IMR-90 (cell line): ENCODE measurements at regions of chr20 and their contacts with region 1.

Region 1: GRCh38 chr20:47379433-47380150 is 23.1 kb upstream of the ZMYND8 start:
- DNase-seq: peak; percentile 97
- ATAC-seq: peak; percentile 69
- H3K4me3 ChIP-seq: no peak overlapping the region
- H3K27ac ChIP-seq: no peak overlapping the region; the same call in 1 of the 2 replicates
- H3K4me1 ChIP-seq: peaks cover 9% of the 10 kb centered on the region
- H3K27me3 ChIP-seq: no peaks in the 10 kb centered on the region
- CTCF ChIP-seq: no peak
- POLR2A ChIP-seq: no peak; the same call in 1 of the 2 replicates
- RAD21 ChIP-seq: no peak; the same call in none of the 2 replicates

Region 2: GRCh38 chr20:46914789-46915379 is 464.7 kb before region 1 on chr20:
- CTCF ChIA-PET with region 1: no interaction called
- POLR2A ChIA-PET with region 1: no interaction called
- dilution Hi-C with region 1: no loop called
- in situ Hi-C with region 1: no loop called
- intact Hi-C with region 1: no loop called
- DNase-seq: peak; percentile 35
- ATAC-seq: no peak
- H3K4me3 ChIP-seq: no peak overlapping the region
- H3K27ac ChIP-seq: no peak overlapping the region
- H3K4me1 ChIP-seq: peaks cover 11% of the 10 kb centered on the region
- H3K27me3 ChIP-seq: no peaks in the 10 kb centered on the region
- CTCF ChIP-seq: no peak
- POLR2A ChIP-seq: no peak
- RAD21 ChIP-seq: no peak

Region 3: GRCh38 chr20:47146703-47147102 is 232.9 kb before region 1 on chr20:
- CTCF ChIA-PET with region 1: no interaction called
- POLR2A ChIA-PET with region 1: no interaction called
- dilution Hi-C with region 1: no loop called
- in situ Hi-C with region 1: no loop called
- intact Hi-C with region 1: no loop called
- DNase-seq: peak; percentile 73
- ATAC-seq: peak; percentile 84
- H3K4me3 ChIP-seq: no peak overlapping the region
- H3K27ac ChIP-seq: no peak overlapping the region
- H3K4me1 ChIP-seq: peaks cover 8% of the 10 kb centered on the region; the same call in 1 of the 2 replicates
- H3K27me3 ChIP-seq: no peaks in the 10 kb centered on the region
- CTCF ChIP-seq: no peak
- POLR2A ChIP-seq: no peak
- RAD21 ChIP-seq: 0 out of 2 replicates have a peak, but pooled peaks have one; percentile 13

Region 4: DNA sequence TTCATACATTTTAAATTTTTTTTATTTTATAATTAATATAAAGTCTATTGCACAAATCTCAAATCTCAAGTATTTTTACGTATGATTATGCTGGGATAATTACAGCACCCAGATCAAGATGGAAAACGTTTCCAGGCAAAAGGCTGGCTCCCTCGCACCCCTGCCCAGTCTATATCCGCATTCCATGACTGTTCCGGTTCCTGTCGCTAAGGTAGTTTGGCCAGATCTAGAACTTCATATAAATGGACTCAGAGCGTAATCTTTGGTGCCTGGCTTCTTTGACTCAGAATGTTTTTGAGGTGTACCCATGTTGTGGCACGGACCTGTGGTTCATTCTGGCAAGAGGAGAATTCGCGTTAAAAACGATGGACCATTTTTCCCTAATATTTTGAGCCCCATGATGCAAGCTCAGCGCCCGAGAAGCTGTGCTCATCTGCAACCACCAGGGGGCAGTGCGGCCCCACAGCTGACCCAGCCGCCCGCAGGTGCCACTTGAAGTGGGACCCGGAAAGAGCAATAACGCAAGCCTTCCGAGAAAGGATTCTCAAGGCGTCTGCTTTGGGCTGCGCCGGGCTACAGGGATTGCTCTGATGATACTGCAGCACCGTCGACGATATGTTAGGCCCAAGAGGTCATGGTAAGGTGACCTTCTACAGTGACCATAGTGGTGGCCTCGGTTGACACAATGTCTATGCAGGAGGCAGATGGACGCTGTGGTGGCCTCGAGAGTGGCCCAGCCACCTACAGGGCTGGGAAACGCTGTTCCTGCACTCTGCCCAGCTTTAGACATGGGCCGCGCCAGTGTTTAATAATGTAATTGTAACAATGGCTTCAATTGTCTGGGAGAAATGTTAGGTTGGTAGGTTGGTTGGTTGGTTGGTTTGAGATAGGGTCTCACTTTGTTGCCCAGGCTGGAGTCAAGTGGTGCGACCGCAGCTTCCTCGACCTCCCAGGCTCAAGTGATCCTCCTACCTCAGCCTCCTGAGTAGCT is 183.2 kb before region 1 on chr20:
- CTCF ChIA-PET with region 1: interaction called, 12 read pairs
- POLR2A ChIA-PET with region 1: no interaction called
- dilution Hi-C with region 1: no loop called
- in situ Hi-C with region 1: loop called (anchors 5 kb)
- intact Hi-C with region 1: loop called (anchors 1 kb)
- DNase-seq: peak; percentile 60
- ATAC-seq: peak; percentile 94
- H3K4me3 ChIP-seq: no peak overlapping the region
- H3K27ac ChIP-seq: no peak overlapping the region
- H3K4me1 ChIP-seq: peaks cover 3% of the 10 kb centered on the region; the same call in 1 of the 2 replicates
- H3K27me3 ChIP-seq: no peaks in the 10 kb centered on the region
- CTCF ChIP-seq: peak; percentile 96
- POLR2A ChIP-seq: peak; percentile 42; the same call in 1 of the 2 replicates
- RAD21 ChIP-seq: peak; percentile 96

Region 5: GRCh38 chr20:47220161-47220582 is 159.4 kb before region 1 on chr20:
- CTCF ChIA-PET with region 1: interaction called, 20 read pairs
- POLR2A ChIA-PET with region 1: no interaction called
- dilution Hi-C with region 1: no loop called
- in situ Hi-C with region 1: no loop called
- intact Hi-C with region 1: loop called (anchors 1 kb)
- DNase-seq: no peak
- ATAC-seq: no peak
- H3K4me3 ChIP-seq: no peak overlapping the region
- H3K27ac ChIP-seq: no peak overlapping the region; the same call in 1 of the 2 replicates
- H3K4me1 ChIP-seq: peaks cover 2% of the 10 kb centered on the region; the same call in 1 of the 2 replicates
- H3K27me3 ChIP-seq: no peaks in the 10 kb centered on the region
- CTCF ChIP-seq: peak; percentile 53
- POLR2A ChIP-seq: no peak
- RAD21 ChIP-seq: peak; percentile 47

Region 6: GRCh38 chr20:47272893-47273590 is 106.5 kb before region 1 on chr20:
- CTCF ChIA-PET with region 1: interaction called, 101 read pairs
- POLR2A ChIA-PET with region 1: no interaction called
- dilution Hi-C with region 1: loop called (anchors 25 kb)
- in situ Hi-C with region 1: loop called (anchors 5 kb)
- intact Hi-C with region 1: loop called (anchors 1 kb)
- DNase-seq: peak; percentile 71
- ATAC-seq: peak; percentile 50
- H3K4me3 ChIP-seq: no peak overlapping the region
- H3K27ac ChIP-seq: peak overlapping the region; percentile 32; the same call in 1 of the 2 replicates
- H3K4me1 ChIP-seq: peaks cover 20% of the 10 kb centered on the region
- H3K27me3 ChIP-seq: no peaks in the 10 kb centered on the region
- CTCF ChIP-seq: peak; percentile 96
- POLR2A ChIP-seq: 0 out of 2 replicates have a peak, but pooled peaks have one; percentile 34
- RAD21 ChIP-seq: peak; percentile 96

Region 7: DNA sequence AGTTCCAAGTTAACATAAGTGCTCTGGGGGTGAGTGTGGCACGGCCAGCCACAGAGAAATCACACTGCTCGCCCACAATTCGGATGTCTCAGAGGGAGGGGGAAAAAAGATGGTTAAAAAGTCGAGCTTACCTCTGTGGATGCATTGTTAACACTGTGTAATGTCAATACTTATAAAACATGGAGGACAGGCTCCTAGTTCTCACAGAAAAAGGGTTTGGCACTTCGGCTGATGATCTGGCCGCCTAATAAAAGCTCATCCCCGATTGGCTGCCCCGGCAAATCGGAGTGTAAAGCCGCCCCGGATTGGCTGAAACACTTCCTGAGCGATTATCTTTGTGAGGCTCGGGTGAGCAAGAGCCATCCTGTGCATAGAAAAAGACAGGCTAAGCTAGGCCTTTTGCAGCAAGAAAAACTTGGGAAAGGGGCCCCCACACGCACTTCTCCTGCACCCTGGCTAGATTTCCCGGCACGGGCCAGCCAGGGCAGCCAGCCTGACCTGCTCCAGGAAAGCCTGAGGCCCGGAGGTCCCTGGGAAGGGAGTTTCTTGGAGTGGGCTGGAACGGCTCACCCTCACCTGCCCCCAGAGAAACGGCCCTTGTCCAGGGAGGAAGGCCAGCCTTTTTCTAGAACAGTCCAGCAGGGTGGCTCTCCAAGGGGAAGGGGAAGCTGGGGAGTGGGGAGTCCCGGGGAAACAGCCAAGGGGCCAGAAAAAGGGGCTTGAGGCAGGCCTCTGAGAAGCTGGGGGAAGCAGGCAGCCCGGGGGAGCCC is 22.9 kb before region 1 on chr20 and contains the start of gene ZMYND8:
- CTCF ChIA-PET with region 1: interaction called, 15 read pairs
- POLR2A ChIA-PET with region 1: interaction called, 14 read pairs
- dilution Hi-C with region 1: no loop called
- in situ Hi-C with region 1: no loop called
- intact Hi-C with region 1: no loop called
- DNase-seq: peak; percentile 92
- ATAC-seq: peak; percentile 58
- H3K4me3 ChIP-seq: no peak within 1 kb of the TSS
- H3K27ac ChIP-seq: peak within 1 kb of the TSS; percentile 98
- H3K4me1 ChIP-seq: peaks cover 76% of the 10 kb centered on the region
- H3K27me3 ChIP-seq: no peaks in the 10 kb centered on the region
- CTCF ChIP-seq: no peak
- POLR2A ChIP-seq: 0 out of 2 replicates have a peak, but pooled peaks have one; percentile 12
- RAD21 ChIP-seq: no peak
- total RNA-seq, gene ZMYND8: 23.6 and 24.0 TPM in 2 replicates